ENCODE measurements at regions of chr3 and their contacts with region 1.

Region 1: DNA sequence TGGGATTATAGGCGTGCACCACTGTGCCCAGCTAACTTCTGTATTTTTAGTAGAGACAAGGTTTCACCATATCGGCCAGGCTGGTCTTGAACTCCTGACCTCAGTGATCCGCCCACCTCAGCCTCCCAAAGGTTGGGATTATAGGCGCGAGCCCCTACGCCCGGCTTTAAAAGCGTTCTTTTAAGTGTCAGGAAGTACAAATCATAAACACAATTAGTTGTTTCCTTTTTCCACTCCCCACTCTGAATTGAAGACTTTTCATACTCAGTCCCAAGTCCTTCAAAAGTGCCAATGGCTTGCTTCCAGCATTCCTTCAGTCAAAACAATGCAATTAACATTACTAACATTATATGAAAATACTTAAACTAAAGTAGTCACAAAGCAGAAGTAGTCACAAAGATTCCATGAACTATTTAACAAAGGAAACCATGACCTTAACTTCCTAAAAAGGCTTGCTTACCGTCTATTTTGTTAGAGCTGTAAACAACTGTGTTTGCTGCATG is 8.1 kb downstream of the WDR82 start:
- DNase-seq: no peak
- H3K4me3 ChIP-seq: peak overlapping the region in 1 of 4 donors; percentile 8
- H3K27ac ChIP-seq: peak overlapping the region; percentile 50 to 98 (median 97)
- H3K4me1 ChIP-seq: peaks cover 66 to 81% (median 76%) of the 10 kb centered on the region in 4 donors
- H3K27me3 ChIP-seq: no peaks in the 10 kb centered on the region
- CTCF ChIP-seq: no peak
- EP300 ChIP-seq: no peak
- POLR2A ChIP-seq: no peak

Region 2: GRCh38 chr3:52046186-52046913 is 224.0 kb before region 1 on chr3:
- intact Hi-C with region 1: no loop called
- DNase-seq: no peak
- H3K4me3 ChIP-seq: no peak overlapping the region
- H3K27ac ChIP-seq: peak overlapping the region; percentile 48 to 60 (median 55)
- H3K4me1 ChIP-seq: peaks cover 37 to 61% (median 43%) of the 10 kb centered on the region in 4 donors
- H3K27me3 ChIP-seq: no peaks in the 10 kb centered on the region
- CTCF ChIP-seq: no peak
- EP300 ChIP-seq: no peak
- POLR2A ChIP-seq: no peak

Region 3: DNA sequence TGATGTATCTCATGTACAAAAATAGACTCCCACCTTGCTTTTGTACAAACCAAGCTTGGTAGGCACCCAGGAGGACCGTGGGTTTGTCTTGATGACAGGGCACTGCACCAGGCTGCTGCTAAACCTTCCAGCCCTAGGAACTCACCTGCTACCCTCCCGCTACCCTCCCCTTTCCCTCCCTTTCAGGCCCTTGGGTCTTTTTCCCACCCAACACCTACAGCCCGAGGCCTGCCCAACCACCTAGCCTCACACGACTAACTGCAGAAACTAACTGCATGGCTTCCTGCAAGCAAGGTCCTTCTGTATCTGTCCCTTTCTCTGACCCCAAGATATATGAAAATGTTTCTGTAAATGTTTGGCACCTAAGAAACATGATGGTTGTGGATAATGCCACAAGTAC is 13.7 kb before region 1 on chr3:
- intact Hi-C with region 1: loop called (anchors 1 kb)
- DNase-seq: no peak
- H3K4me3 ChIP-seq: no peak overlapping the region
- H3K27ac ChIP-seq: peak overlapping the region in 1 of 4 donors; percentile 63
- H3K4me1 ChIP-seq: peaks cover 0 to 55% (median 44%) of the 10 kb centered on the region in 4 donors
- H3K27me3 ChIP-seq: no peaks in the 10 kb centered on the region
- CTCF ChIP-seq: no peak
- EP300 ChIP-seq: no peak
- POLR2A ChIP-seq: no peak

Region 4: DNA sequence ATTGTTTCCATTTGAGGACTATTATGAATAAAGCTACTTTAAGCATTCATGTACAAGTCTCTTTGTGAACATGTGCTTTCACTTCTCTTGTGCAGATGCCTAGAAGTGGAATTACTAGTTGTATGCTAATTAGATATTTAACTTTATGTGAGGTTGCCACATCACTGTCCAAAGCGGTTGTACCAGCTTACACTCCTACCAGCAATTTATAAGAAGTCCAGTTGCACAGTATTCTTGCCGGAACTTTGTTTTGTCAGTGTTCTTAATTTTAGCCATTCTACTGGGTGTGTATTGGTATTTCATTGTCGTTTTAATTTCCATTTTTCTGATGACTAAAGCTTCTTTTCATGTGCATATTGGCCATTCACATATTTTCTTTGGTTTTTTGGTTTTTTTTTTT is 145.5 kb after region 1 on chr3:
- intact Hi-C with region 1: no loop called
- DNase-seq: no peak
- H3K4me3 ChIP-seq: no peak overlapping the region
- H3K27ac ChIP-seq: no peak overlapping the region
- H3K4me1 ChIP-seq: peaks cover 19 to 34% (median 27%) of the 10 kb centered on the region in 4 donors
- H3K27me3 ChIP-seq: no peaks in the 10 kb centered on the region
- CTCF ChIP-seq: no peak
- EP300 ChIP-seq: no peak
- POLR2A ChIP-seq: no peak

Region 5: DNA sequence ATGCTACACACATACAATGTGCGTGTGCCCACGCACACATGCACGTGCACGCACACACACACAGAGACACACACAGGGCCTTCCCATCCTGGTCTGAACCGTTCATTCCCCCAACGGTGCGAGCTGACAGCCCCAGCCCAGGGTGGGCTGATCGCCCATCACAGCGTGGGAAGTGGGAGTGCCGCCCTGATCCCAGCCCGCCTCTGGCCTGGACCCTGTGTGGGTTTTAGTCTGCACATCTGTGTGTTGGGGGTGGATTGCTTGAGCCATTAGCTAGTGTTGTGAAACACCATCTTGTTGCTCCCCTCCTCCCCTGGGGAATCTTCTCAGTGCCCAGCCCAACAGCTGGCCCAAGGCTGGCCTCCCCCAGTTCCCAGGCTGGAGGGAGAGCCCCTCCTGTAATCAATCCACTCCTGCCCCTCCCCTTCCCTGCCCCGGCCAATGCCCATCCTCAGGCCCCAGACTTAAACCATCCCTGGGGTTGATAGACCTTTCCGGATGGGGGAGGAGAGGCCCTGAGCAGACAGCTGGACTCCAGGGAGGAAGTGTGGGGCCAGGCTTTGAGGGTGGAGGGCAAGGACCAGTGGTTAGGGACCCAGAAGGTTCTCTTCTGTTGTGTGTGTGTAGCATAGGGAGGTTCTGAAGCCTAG is 166.3 kb after region 1 on chr3:
- intact Hi-C with region 1: no loop called
- DNase-seq: no peak
- H3K4me3 ChIP-seq: no peak overlapping the region
- H3K27ac ChIP-seq: no peak overlapping the region
- H3K4me1 ChIP-seq: peaks cover 15 to 35% (median 20%) of the 10 kb centered on the region in 4 donors
- H3K27me3 ChIP-seq: no peaks in the 10 kb centered on the region
- CTCF ChIP-seq: no peak
- EP300 ChIP-seq: no peak
- POLR2A ChIP-seq: no peak